Left ventricle myocardium superior (tissue), 1 donor: ENCODE measurements at regions of chr1 and their contacts with region 1.

Region 1: GRCh38 chr1:160193091-160193819 is 2.9 kb downstream of the CASQ1 start:
- DNase-seq: peak; percentile 89
- ATAC-seq: peak; percentile 81

Region 2: DNA sequence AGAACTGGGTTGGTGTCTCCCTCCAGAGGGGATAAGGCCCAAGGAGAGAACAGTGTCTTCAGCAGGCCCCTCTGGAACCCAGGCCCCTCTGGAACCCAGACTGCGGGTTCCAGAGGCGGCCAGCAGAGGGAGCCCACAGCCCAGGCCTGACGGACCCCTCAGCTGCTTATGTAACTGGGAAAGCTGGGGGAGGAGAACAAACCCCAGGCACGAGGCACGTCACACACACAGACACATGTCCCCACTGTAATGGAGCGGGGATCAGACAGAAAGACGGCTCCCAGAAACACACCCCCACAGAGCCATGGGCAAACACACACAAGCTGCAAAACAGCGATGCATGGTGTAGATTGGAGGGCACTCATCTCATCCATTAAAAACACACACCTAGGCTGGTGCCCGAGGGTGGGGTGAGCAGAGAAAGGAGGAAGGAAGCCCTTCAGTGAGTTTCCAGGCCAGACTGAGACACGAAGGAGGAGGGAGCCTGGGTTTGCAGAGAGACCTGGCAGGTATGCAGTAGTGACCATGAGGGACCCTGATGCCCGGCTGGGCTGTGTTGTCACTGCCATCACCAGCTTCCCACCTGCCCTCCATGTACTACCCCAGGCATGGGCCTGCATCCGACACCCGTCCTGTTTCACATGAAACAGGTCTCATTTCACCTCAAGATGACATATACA is 92.1 kb before region 1 on chr1:
- intact Hi-C with region 1: loop called (anchors 10 kb)
- DNase-seq: peak; percentile 89
- ATAC-seq: peak; percentile 46

Region 3: DNA sequence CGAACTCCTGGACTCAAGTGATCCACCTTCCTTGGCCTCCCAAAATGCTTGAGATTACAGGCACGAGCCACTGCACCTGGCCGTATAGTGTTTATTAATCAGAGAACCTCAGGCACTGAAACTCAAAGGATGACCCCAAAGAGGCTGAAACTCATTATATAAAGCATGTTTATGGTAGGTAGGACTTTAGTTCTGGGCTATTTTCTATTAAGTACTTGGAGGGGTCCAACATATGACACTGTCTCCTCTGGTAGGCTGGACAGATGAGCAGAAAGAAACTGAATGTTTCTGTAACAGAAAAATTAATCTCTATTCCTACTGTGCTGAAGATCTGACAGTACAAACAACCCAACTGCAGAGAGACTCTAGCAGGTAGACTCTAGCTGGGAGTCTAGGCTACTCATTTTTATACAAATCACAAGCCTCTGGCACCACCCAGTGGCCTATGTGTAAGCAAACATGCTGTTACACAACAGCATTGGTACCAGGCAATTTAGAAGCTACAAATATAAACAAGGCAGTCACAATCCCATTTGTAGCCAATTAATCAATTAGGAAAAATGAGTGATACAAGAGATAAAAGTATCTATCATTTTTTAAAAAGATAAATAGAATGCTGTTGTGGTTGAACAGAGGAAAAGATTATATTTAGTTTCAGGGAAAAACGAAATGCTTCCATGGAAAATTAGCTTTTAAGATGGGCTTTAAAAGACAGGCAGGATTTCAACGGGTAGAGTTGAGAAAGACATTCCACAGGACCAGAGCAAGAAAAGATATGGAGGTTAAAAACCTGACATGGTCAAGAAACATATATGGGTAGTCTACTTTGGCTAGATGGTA is 58.7 kb after region 1 on chr1:
- intact Hi-C with region 1: loop called (anchors 10 kb)
- DNase-seq: peak; percentile 61
- ATAC-seq: peak; percentile 91

Region 4: GRCh38 chr1:160416369-160416768 is 223.1 kb after region 1 on chr1:
- intact Hi-C with region 1: no loop called
- DNase-seq: no peak
- ATAC-seq: no peak